ENCODE measurements at regions of chr3 and their contacts with region 1.

Region 1: GRCh38 chr3:187291001-187291511 is 481 bp downstream of the MASP1 start:
- DNase-seq: peak; percentile 17 to 23
- ATAC-seq: peak; percentile 59 to 76
- H3K4me3 ChIP-seq: peak overlapping the region; percentile 22 to 47 (median 34)
- H3K27ac ChIP-seq: peak overlapping the region; percentile 63 to 73 (median 69)
- H3K4me1 ChIP-seq: peaks cover 17 to 63% of the 10 kb centered on the region in 2 donors
- H3K27me3 ChIP-seq: no peaks in the 10 kb centered on the region
- CTCF ChIP-seq: no peak
- POLR2A ChIP-seq: no peak

Region 2: GRCh38 chr3:187227658-187228258 is 63.3 kb before region 1 on chr3:
- in situ Hi-C with region 1: loop called in 1 of 4 experiments (anchors 10 kb)
- intact Hi-C with region 1: no loop called
- DNase-seq: no peak
- ATAC-seq: no peak
- H3K4me3 ChIP-seq: no peak overlapping the region
- H3K27ac ChIP-seq: no peak overlapping the region
- H3K4me1 ChIP-seq: no peaks in the 10 kb centered on the region
- H3K27me3 ChIP-seq: no peaks in the 10 kb centered on the region
- CTCF ChIP-seq: no peak
- POLR2A ChIP-seq: no peak